Naive thymus-derived CD4-positive, alpha-beta T cell (primary cell): ENCODE measurements at regions of chr7 and their contacts with region 1.

Region 1: GRCh38 chr7:134811765-134812164 is 32.3 kb downstream of the CALD1 start:
- DNase-seq: no peak
- ATAC-seq: no peak
- H3K4me3 ChIP-seq: no peak overlapping the region
- H3K4me3 Mint-ChIP-seq: no peak overlapping the region
- H3K27ac ChIP-seq: no peak overlapping the region
- H3K27ac Mint-ChIP-seq: no peak overlapping the region
- H3K4me1 ChIP-seq: no peaks in the 10 kb centered on the region
- H3K4me1 Mint-ChIP-seq: no peaks in the 10 kb centered on the region
- H3K27me3 ChIP-seq: no peaks in the 10 kb centered on the region
- H3K27me3 Mint-ChIP-seq: peaks cover 0 to 4% (median 0%) of the 10 kb centered on the region in 5 donors

Region 2: GRCh38 chr7:134792968-134793367 is 18.8 kb before region 1 on chr7:
- CTCF ChIA-PET with region 1: no interaction called
- POLR2A ChIA-PET with region 1: interaction called, 4 read pairs
- intact Hi-C with region 1: loop called in 1 of 2 experiments (anchors 2 kb)
- DNase-seq: no peak
- ATAC-seq: no peak
- H3K4me3 ChIP-seq: no peak overlapping the region
- H3K4me3 Mint-ChIP-seq: no peak overlapping the region
- H3K27ac ChIP-seq: no peak overlapping the region
- H3K27ac Mint-ChIP-seq: no peak overlapping the region
- H3K4me1 ChIP-seq: no peaks in the 10 kb centered on the region
- H3K4me1 Mint-ChIP-seq: peaks cover 0 to 5% (median 0%) of the 10 kb centered on the region in 7 donors
- H3K27me3 ChIP-seq: no peaks in the 10 kb centered on the region
- H3K27me3 Mint-ChIP-seq: no peaks in the 10 kb centered on the region

Region 3: GRCh38 chr7:134827889-134828288 is 16.1 kb after region 1 on chr7:
- CTCF ChIA-PET with region 1: no interaction called
- POLR2A ChIA-PET with region 1: no interaction called
- intact Hi-C with region 1: no loop called
- DNase-seq: no peak
- ATAC-seq: no peak
- H3K4me3 ChIP-seq: no peak overlapping the region
- H3K4me3 Mint-ChIP-seq: no peak overlapping the region
- H3K27ac ChIP-seq: no peak overlapping the region
- H3K27ac Mint-ChIP-seq: no peak overlapping the region
- H3K4me1 ChIP-seq: no peaks in the 10 kb centered on the region
- H3K4me1 Mint-ChIP-seq: no peaks in the 10 kb centered on the region
- H3K27me3 ChIP-seq: no peaks in the 10 kb centered on the region
- H3K27me3 Mint-ChIP-seq: no peaks in the 10 kb centered on the region

Region 4: DNA sequence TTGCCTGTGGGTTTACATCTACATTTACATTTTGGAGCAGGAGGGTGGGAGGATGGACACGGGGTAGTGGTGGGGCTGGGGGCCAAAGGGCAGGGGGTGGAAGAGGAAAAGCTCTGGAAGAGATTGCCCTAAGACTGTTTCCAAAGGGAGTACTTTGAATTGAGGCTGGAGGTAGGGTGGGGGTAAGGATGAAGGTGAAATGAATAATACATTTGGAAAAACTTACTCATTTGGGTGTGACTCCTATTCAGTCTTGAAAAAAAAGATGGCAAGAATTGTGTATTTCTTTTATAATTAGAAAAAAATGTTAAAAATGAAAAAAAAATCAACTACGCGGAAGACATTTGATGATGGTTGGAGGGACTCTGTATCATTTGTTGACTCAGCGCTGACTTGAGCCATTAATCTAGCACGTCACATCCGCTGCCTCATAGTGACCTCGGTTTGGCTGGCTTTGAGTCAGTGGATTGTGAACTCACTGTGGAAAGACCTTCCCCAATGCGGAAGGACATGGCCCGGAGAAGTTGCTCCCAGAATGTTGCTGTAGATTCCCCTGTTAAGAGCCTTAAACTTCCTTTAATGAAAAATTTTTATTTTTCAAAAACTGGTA is 934.0 kb after region 1 on chr7:
- CTCF ChIA-PET with region 1: no interaction called
- POLR2A ChIA-PET with region 1: no interaction called
- intact Hi-C with region 1: no loop called
- DNase-seq: no peak
- ATAC-seq: no peak
- H3K4me3 ChIP-seq: no peak overlapping the region
- H3K4me3 Mint-ChIP-seq: no peak overlapping the region
- H3K27ac ChIP-seq: no peak overlapping the region
- H3K27ac Mint-ChIP-seq: no peak overlapping the region
- H3K4me1 ChIP-seq: no peaks in the 10 kb centered on the region
- H3K4me1 Mint-ChIP-seq: no peaks in the 10 kb centered on the region
- H3K27me3 ChIP-seq: no peaks in the 10 kb centered on the region
- H3K27me3 Mint-ChIP-seq: peaks cover 3 to 14% (median 4%) of the 10 kb centered on the region in 5 donors

Region 5: GRCh38 chr7:136405931-136406777 is 1594.4 kb after region 1 on chr7:
- CTCF ChIA-PET with region 1: no interaction called
- POLR2A ChIA-PET with region 1: no interaction called
- intact Hi-C with region 1: no loop called
- DNase-seq: peak in 5 of 9 donors; percentile 7 to 23 (median 14)
- ATAC-seq: peak; percentile 69
- H3K4me3 ChIP-seq: no peak overlapping the region
- H3K4me3 Mint-ChIP-seq: no peak overlapping the region
- H3K27ac ChIP-seq: no peak overlapping the region
- H3K27ac Mint-ChIP-seq: no peak overlapping the region
- H3K4me1 ChIP-seq: no peaks in the 10 kb centered on the region
- H3K4me1 Mint-ChIP-seq: peaks cover 0 to 11% (median 7%) of the 10 kb centered on the region in 7 donors
- H3K27me3 ChIP-seq: no peaks in the 10 kb centered on the region
- H3K27me3 Mint-ChIP-seq: no peaks in the 10 kb centered on the region